IMR-90 (cell line): ENCODE measurements at regions of chr12 and their contacts with region 1.

Region 1: GRCh38 chr12:111599459-111600204 is 517 bp upstream of the ATXN2 start:
- DNase-seq: peak; percentile 95
- ATAC-seq: peak; percentile 89
- H3K4me3 ChIP-seq: peak overlapping the region; percentile 65
- H3K27ac ChIP-seq: peak overlapping the region; percentile 98
- H3K4me1 ChIP-seq: no peaks in the 10 kb centered on the region
- H3K27me3 ChIP-seq: no peaks in the 10 kb centered on the region
- CTCF ChIP-seq: no peak
- POLR2A ChIP-seq: peak; percentile 84
- RAD21 ChIP-seq: no peak; the same call in 1 of the 2 replicates

Region 2: DNA sequence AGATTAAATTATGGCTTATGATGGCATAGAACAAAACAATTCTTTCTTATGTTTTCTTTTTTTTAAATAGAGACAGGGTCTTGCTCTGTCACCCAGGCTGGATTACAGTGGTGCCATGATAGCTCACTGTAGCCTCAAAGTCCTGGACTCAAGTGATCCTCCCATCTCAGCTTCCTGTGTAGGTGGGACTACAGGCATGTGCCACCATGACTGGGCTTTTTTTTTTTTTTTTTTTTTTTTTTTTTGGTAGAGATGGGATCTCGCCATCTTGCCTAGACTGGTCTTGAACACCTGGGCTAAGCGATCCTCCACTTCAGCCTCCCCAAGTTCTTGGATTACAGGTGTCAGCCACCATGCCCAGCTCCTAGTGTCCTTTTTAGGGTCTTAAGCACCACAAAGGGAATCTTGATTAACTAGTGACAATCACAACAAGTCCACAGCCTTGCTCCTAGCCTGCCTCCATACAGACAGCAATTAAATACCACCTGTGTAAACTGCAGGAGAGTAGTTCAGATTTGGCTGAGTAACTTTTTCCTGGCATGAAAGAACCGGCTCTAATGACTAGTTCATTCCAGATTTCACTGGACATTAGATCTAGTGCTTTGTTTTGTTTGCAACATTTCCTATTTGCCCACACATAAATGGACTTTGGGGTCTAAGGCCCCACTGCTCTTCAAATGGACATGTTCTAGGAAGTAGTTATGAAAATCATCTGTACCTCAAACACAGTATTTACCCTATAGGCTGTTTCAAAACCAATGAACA is 132.4 kb before region 1 on chr12:
- CTCF ChIA-PET with region 1: no interaction called
- POLR2A ChIA-PET with region 1: no interaction called
- dilution Hi-C with region 1: no loop called
- in situ Hi-C with region 1: no loop called
- intact Hi-C with region 1: loop called (anchors 5 kb)
- DNase-seq: peak; percentile 65
- ATAC-seq: peak; percentile 25
- H3K4me3 ChIP-seq: no peak overlapping the region
- H3K27ac ChIP-seq: peak overlapping the region; percentile 86; the same call in 1 of the 2 replicates
- H3K4me1 ChIP-seq: peaks cover 16% of the 10 kb centered on the region
- H3K27me3 ChIP-seq: no peaks in the 10 kb centered on the region
- CTCF ChIP-seq: no peak
- POLR2A ChIP-seq: no peak
- RAD21 ChIP-seq: no peak

Region 3: GRCh38 chr12:111546758-111547383 is 52.8 kb before region 1 on chr12:
- CTCF ChIA-PET with region 1: no interaction called
- POLR2A ChIA-PET with region 1: no interaction called
- dilution Hi-C with region 1: no loop called
- in situ Hi-C with region 1: no loop called
- intact Hi-C with region 1: loop called (anchors 10 kb)
- DNase-seq: peak; percentile 26
- ATAC-seq: no peak
- H3K4me3 ChIP-seq: no peak overlapping the region
- H3K27ac ChIP-seq: no peak overlapping the region
- H3K4me1 ChIP-seq: no peaks in the 10 kb centered on the region
- H3K27me3 ChIP-seq: no peaks in the 10 kb centered on the region
- CTCF ChIP-seq: no peak
- POLR2A ChIP-seq: no peak
- RAD21 ChIP-seq: no peak

Region 4: GRCh38 chr12:111570084-111570961 is 29.3 kb before region 1 on chr12:
- CTCF ChIA-PET with region 1: no interaction called
- POLR2A ChIA-PET with region 1: no interaction called
- dilution Hi-C with region 1: no loop called
- in situ Hi-C with region 1: no loop called
- intact Hi-C with region 1: loop called (anchors 2 kb)
- DNase-seq: peak; percentile 92
- ATAC-seq: peak; percentile 97
- H3K4me3 ChIP-seq: no peak overlapping the region
- H3K27ac ChIP-seq: peak overlapping the region; percentile 47
- H3K4me1 ChIP-seq: peaks cover 12% of the 10 kb centered on the region
- H3K27me3 ChIP-seq: no peaks in the 10 kb centered on the region
- CTCF ChIP-seq: no peak
- POLR2A ChIP-seq: no peak
- RAD21 ChIP-seq: no peak

Region 5: DNA sequence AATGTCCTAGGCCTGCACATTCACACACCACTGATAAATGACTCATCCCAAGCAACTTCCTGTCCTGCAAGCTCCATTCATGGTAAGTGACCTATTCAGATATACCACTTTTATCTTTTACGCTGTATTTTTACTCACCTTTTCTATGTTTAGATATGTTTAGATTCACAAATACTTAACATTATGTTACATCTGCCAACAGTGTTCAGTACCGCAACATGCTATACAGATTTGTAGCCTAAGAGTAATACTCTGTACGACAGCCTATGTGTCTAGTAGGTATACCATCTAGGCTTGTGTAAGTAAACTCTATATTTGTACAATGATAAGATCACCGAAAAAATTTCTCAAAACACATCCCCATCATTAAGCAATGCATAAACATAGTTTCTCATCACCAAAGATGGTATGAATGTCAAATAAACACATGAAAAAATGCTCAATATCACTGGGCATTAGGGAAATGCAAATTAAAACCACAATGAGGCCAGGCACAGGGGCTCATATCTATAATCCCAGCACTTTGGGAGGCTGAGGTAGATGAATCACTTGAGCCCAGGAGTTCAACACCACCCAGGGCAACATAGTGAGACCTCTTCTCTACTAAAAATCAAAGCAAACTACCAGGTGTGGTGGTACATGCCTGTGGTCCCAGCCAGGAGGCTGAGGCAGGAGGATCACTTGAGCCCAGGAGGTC is 21.2 kb before region 1 on chr12:
- CTCF ChIA-PET with region 1: no interaction called
- POLR2A ChIA-PET with region 1: no interaction called
- dilution Hi-C with region 1: no loop called
- in situ Hi-C with region 1: no loop called
- intact Hi-C with region 1: loop called (anchors 2 kb)
- DNase-seq: peak; percentile 91
- ATAC-seq: peak; percentile 87
- H3K4me3 ChIP-seq: no peak overlapping the region
- H3K27ac ChIP-seq: peak overlapping the region; percentile 96
- H3K4me1 ChIP-seq: peaks cover 14% of the 10 kb centered on the region
- H3K27me3 ChIP-seq: no peaks in the 10 kb centered on the region
- CTCF ChIP-seq: no peak
- POLR2A ChIP-seq: no peak
- RAD21 ChIP-seq: no peak

Region 6: GRCh38 chr12:111643427-111643826 is 43.8 kb after region 1 on chr12:
- CTCF ChIA-PET with region 1: no interaction called
- POLR2A ChIA-PET with region 1: no interaction called
- dilution Hi-C with region 1: no loop called
- in situ Hi-C with region 1: no loop called
- intact Hi-C with region 1: loop called (anchors 1 kb)
- DNase-seq: peak; percentile 95
- ATAC-seq: peak; percentile 91
- H3K4me3 ChIP-seq: no peak overlapping the region
- H3K27ac ChIP-seq: no peak overlapping the region
- H3K4me1 ChIP-seq: peaks cover 16% of the 10 kb centered on the region
- H3K27me3 ChIP-seq: no peaks in the 10 kb centered on the region
- CTCF ChIP-seq: no peak
- POLR2A ChIP-seq: no peak
- RAD21 ChIP-seq: no peak

Region 7: DNA sequence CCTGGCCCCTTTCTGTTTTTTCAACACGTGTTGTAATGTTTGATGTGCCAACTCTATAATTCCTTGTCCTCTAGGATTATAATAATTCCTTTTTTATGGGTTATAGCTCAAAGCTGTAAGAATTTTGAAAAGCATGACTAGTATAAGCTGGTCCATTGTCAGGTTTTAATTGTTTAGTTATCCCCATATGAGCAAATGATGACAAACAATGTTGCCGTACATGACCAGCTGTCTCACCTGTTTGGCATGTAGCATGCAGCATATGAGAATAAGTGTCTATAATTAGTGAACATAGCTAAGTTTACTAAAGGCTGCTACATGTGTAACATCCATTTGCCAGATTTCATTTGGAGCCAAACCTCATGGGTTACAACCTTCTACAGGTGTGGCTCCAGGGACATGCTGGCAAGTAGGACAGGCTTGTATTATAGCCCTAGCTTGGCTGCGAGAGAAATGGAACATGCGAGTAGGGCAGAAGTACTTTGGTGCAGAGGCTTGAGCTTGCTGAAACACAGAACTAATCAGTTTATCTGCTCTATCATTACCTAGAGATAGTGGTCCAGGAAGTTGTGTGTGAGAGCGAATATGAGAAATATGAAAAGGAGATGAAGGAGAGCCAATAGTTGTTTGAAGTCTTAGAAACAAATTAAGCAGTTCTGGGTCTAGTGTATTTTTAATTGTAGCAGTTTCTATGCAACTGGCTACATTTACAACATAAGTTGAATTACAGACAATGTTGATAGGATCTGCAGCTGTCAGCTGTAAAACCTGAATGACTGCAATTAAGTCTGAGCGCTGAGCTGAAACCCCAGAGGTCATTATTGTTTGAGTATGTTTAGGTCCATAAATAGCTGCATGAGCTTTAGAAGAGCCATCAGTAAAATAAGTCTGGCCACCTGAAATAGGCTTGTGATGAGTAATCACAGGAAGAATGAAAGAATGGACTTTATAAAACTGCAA is 219.8 kb after region 1 on chr12:
- CTCF ChIA-PET with region 1: no interaction called
- POLR2A ChIA-PET with region 1: no interaction called
- dilution Hi-C with region 1: no loop called
- in situ Hi-C with region 1: no loop called
- intact Hi-C with region 1: no loop called
- DNase-seq: no peak
- ATAC-seq: no peak
- H3K4me3 ChIP-seq: no peak overlapping the region
- H3K27ac ChIP-seq: no peak overlapping the region
- H3K4me1 ChIP-seq: no peaks in the 10 kb centered on the region
- H3K27me3 ChIP-seq: peaks cover 12% of the 10 kb centered on the region
- CTCF ChIP-seq: no peak
- POLR2A ChIP-seq: no peak
- RAD21 ChIP-seq: no peak